ENCODE measurements at regions of chr2 and their contacts with region 1.

Region 1: GRCh38 chr2:54899576-54900200 is 150.6 kb downstream of the RTN4 start:
- DNase-seq: peak; percentile 25
- H3K4me3 Mint-ChIP-seq: no peak overlapping the region
- H3K27ac Mint-ChIP-seq: no peak overlapping the region
- H3K4me1 Mint-ChIP-seq: peaks cover 33% of the 10 kb centered on the region
- H3K27me3 Mint-ChIP-seq: no peaks in the 10 kb centered on the region
- CTCF ChIP-seq: peak; percentile 61

Region 2: DNA sequence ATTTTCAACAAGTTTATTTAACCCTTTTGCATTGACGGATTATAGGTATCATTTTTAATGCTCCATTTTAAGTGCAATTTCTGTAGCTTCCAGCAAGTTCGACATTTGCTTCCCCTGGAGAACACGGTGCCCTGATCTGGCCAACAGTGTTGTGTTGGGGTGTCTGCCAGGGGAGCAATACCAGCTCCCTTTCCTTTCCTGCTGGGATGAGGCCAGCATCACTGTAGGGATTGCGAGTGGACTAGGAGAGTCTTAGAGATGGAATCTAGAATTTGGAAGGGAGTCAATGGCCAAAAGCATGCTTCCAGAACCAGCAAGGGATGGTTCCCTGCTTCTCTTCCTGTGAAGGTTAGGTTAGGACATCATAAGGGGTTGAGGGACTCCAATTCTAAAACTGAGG is 15.4 kb after region 1 on chr2:
- CTCF ChIA-PET with region 1: no interaction called
- intact Hi-C with region 1: no loop called
- DNase-seq: no peak
- H3K4me3 Mint-ChIP-seq: no peak overlapping the region
- H3K27ac Mint-ChIP-seq: no peak overlapping the region
- H3K4me1 Mint-ChIP-seq: no peaks in the 10 kb centered on the region
- H3K27me3 Mint-ChIP-seq: peaks cover 23% of the 10 kb centered on the region
- CTCF ChIP-seq: no peak

Region 3: DNA sequence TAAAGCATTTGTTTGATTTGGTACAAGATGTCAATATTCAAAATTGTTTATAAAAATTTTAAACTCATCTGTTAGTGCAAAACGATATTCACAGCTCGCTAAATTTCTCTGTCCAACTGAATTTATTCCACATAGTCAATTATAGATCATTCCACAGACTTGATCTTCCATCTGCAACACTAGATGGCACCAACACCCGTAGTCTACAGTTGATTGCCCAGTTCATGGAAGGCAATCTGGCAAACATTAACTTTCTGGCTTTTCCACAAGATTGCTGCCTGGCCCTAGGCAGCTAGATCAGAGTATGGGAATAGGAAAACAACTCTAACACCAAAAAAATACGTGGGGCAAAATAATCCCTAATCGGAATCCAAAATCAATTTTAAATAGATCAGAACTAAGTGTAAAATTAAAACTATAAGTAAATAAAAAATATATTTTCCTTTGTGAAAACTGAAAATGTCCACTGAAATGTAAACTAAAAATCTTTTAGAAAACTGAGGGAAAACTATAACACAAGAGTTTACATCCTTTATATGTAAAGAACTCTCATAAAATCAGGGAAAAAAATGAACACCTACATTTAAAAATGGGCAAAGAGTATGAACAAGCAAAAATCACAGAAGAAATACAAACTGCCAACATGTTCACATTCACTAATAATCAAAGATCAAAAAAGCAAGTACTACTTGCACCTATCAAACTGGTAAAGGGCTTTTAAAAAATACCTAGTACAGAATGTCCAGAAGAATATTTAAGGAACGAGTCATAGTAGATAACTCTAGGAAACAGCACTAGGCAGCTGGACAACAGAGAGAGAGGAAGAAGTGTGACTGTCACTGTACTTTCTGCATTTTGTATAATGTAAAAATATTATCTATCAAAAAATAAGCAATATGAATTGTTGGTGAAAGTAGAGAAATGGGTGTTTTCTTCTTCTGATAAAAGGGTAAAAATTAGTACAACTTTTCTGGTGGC is 115.6 kb after region 1 on chr2:
- CTCF ChIA-PET with region 1: interaction called, 36 read pairs
- intact Hi-C with region 1: loop called (anchors 2 kb)
- DNase-seq: peak; percentile 62
- H3K4me3 Mint-ChIP-seq: peak overlapping the region; percentile 45
- H3K27ac Mint-ChIP-seq: peak overlapping the region; percentile 37
- H3K4me1 Mint-ChIP-seq: peaks cover 59% of the 10 kb centered on the region
- H3K27me3 Mint-ChIP-seq: no peaks in the 10 kb centered on the region
- CTCF ChIP-seq: peak; percentile 56

Region 4: DNA sequence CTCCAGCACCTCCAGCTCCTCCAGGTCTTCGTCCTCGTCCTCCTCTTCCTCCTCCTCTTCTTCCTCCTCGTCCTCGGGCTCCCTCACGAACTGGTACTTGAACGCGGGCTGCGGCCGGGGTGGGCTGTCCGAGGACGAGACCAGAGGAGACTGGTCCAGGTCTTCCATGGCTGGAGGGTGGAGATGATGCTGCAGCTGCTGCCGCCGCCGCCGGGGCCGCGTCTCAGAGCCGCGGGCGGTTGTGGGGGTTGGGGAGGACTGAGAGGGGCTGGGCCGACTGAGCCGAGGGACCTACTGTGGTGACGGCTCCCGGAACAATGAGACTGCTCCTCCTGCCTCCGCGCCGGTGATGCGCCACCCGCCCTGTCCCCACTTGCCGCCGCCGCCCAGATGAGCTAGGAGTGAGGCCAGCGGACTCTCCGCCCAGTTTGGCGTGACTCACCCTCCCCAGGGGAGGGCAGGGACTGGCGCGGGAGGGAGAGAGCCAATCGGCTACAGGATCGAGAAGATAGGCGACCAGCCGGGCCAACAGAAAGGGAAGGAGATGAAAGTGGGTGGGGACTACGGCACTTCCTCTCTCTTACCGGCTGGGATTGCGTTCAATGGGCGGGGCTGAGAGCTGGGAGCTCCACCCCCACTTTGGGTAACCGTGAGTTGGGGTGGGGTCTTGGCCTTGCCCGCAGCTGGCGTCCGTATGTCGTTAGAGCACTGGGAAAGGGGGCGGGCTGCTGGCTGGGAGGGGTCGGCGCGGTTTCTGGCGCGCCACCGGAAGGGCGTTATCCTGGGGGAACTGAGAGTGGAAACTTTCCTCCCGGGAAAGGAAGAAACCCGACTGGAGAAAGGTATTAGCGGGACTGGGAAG is 150.7 kb after region 1 on chr2 and contains the start of gene RTN4:
- CTCF ChIA-PET with region 1: interaction called, 12 read pairs
- intact Hi-C with region 1: no loop called
- DNase-seq: peak; percentile 99
- H3K4me3 Mint-ChIP-seq: peak within 1 kb of the TSS; percentile 85
- H3K27ac Mint-ChIP-seq: peak within 1 kb of the TSS; percentile 97
- H3K4me1 Mint-ChIP-seq: peaks cover 31% of the 10 kb centered on the region
- H3K27me3 Mint-ChIP-seq: no peaks in the 10 kb centered on the region
- CTCF ChIP-seq: no peak
- total RNA-seq, gene RTN4: 386 and 394 TPM in 2 replicates

Region 5: DNA sequence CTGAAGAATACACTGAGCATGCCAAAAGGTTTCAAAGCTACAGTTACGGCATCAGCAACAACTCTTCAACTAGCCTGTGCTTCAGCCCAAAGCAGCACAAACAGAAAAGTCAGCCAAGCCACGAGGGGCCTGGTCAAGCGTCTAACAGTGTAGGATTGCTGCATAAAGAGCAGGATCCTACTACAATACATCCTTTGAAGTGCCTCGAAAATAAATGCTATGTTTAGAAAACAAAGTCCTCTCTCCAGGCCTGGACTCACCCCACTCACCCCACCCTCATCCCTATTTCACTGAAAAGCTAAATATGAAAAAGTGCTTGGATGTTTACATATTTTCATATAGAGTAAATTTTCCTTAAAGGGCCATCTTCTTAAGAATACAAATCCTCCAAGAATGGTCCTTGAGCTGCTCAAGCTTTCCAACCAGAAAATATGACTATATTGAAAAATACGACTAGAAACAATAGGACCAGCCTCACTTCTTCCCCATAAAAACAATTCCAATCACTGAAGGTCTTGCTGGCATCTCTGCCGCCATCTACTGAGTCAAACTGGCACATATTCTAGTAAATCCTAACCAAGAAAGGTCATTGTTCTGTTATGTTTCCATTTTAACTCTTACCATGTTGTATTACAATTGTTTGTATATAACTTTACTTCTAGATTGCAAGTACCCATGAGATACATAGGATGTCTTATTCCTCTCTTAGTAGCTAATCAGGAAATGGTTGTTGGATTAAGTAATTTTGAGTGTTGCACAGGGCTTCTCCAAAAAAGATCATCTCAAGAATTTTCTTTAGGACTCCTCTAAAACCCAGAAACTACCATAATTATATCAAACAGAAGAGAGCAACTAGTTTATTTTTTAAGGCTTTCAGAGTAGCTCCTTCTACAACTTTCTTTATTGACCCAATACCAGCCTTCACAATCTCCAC is 268.8 kb after region 1 on chr2:
- CTCF ChIA-PET with region 1: interaction called, 37 read pairs
- intact Hi-C with region 1: no loop called
- DNase-seq: peak; percentile 56
- H3K4me3 Mint-ChIP-seq: no peak overlapping the region
- H3K27ac Mint-ChIP-seq: no peak overlapping the region
- H3K4me1 Mint-ChIP-seq: peaks cover 29% of the 10 kb centered on the region
- H3K27me3 Mint-ChIP-seq: no peaks in the 10 kb centered on the region
- CTCF ChIP-seq: peak; percentile 58

Region 6: GRCh38 chr2:55175254-55176025 is 275.8 kb after region 1 on chr2:
- CTCF ChIA-PET with region 1: interaction called, 37 read pairs
- intact Hi-C with region 1: loop called (anchors 1 kb)
- DNase-seq: peak; percentile 10
- H3K4me3 Mint-ChIP-seq: no peak overlapping the region
- H3K27ac Mint-ChIP-seq: no peak overlapping the region
- H3K4me1 Mint-ChIP-seq: peaks cover 9% of the 10 kb centered on the region
- H3K27me3 Mint-ChIP-seq: no peaks in the 10 kb centered on the region
- CTCF ChIP-seq: peak; percentile 26

Region 7: DNA sequence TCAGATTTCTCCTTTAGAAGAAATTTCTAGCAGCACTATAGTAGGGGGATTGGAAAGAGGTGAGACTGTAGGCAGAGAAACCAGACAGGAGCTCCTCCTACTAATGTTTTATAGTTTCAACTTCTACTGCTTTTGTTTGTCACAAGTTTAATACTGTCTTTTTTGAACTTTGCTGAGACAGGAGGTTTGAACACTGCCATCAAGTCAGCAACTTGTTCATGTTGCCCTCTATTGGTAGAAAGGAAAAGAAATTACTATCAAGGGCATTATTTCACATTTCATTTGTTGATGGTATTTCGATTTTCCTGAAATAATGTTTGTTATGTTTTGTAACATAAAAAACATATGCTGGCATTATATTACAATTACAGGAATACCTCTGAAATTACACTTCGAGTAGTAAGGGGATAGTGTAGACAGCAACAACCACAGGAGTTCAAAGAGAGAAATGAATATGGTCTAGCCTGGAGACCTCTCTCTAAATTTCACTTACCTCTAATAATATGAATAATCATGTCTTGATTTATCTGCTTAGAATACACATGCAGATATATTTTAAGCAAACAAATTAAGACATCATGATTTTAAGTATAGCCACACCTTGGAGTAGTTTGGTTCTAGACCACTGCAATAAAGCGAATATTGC is 532.4 kb after region 1 on chr2:
- CTCF ChIA-PET with region 1: interaction called, 10 read pairs
- intact Hi-C with region 1: no loop called
- DNase-seq: no peak
- H3K4me3 Mint-ChIP-seq: no peak overlapping the region
- H3K27ac Mint-ChIP-seq: no peak overlapping the region
- H3K4me1 Mint-ChIP-seq: peaks cover 8% of the 10 kb centered on the region
- H3K27me3 Mint-ChIP-seq: no peaks in the 10 kb centered on the region
- CTCF ChIP-seq: peak; percentile 25

Measured in Calu3 (cell line).